Activated CD8-positive, alpha-beta T cell treated with anti-CD3 and anti-CD28 coated beads for 36 hours (primary cell): ENCODE measurements at regions of chr11 and their contacts with region 1.

Region 1: GRCh38 chr11:74321487-74322188 is 10.2 kb upstream of the P4HA3 start:
- DNase-seq: peak; percentile 42
- ATAC-seq: no peak
- H3K4me3 Mint-ChIP-seq: no peak overlapping the region
- H3K27ac Mint-ChIP-seq: no peak overlapping the region
- H3K4me1 Mint-ChIP-seq: no peaks in the 10 kb centered on the region
- H3K27me3 Mint-ChIP-seq: peaks cover 9% of the 10 kb centered on the region
- CTCF ChIP-seq: peak; percentile 70

Region 2: DNA sequence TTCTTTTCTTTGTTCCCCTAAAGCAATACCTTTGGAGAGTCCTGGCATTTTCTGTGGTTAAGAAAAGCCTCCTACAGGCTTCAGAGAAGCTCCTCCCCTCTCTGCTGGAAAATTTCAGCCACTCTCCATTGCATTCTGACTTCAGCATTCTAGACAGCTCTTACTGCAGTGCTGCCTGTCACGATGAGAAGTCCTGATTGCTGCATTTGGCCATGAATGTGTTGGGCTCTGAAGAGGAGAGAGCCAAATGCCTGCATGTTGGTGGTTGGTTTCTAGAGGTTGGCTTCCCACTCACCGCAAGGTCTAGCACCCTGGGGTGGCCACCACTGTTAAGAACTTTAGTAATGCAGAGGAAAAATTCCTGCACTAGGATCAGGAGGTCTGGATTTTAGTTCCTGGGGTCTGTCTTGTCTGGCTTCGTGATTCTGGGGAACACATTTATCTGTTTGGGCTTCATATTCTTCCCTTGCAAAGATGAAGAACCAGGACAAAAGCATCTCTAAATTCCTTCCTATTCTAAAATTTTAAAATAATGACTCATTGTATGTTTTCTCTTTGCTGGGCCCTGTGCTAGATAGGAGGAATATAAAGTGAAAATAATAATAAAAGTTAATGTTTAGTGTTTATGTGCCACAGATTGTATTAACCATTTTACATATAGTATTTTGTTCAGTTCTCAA is 483.1 kb before region 1 on chr11:
- CTCF ChIA-PET with region 1: no interaction called
- POLR2A ChIA-PET with region 1: no interaction called
- intact Hi-C with region 1: no loop called
- DNase-seq: no peak
- ATAC-seq: no peak
- H3K4me3 Mint-ChIP-seq: no peak overlapping the region
- H3K27ac Mint-ChIP-seq: no peak overlapping the region
- H3K4me1 Mint-ChIP-seq: no peaks in the 10 kb centered on the region
- H3K27me3 Mint-ChIP-seq: no peaks in the 10 kb centered on the region
- CTCF ChIP-seq: no peak

Region 3: GRCh38 chr11:74255741-74256369 is 65.8 kb before region 1 on chr11:
- CTCF ChIA-PET with region 1: interaction called, 39 read pairs
- POLR2A ChIA-PET with region 1: interaction called, 3 read pairs
- intact Hi-C with region 1: loop called (anchors 5 kb)
- DNase-seq: peak; percentile 60
- ATAC-seq: peak; percentile 81
- H3K4me3 Mint-ChIP-seq: no peak overlapping the region
- H3K27ac Mint-ChIP-seq: no peak overlapping the region
- H3K4me1 Mint-ChIP-seq: peaks cover 3% of the 10 kb centered on the region
- H3K27me3 Mint-ChIP-seq: no peaks in the 10 kb centered on the region
- CTCF ChIP-seq: peak; percentile 85

Region 4: DNA sequence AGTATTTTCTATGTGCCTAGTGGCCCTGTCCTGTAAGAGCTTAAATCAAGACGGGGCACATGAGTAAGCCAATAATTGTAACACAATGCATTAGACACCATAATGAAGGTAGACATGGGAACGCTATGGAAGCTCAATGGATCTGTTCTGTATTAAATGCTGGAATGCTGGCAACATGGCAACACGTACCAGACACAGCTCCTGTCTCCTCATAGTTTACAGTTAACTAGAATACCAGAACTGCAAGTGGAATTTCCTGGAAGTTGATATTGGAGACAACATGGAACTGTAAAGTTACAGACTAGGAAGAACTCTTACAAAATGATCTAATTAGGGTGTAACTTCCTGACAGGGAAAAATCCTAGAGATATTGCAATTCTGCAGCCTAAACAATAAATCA is 22.6 kb before region 1 on chr11:
- CTCF ChIA-PET with region 1: interaction called, 14 read pairs
- POLR2A ChIA-PET with region 1: no interaction called
- intact Hi-C with region 1: no loop called
- DNase-seq: no peak
- ATAC-seq: no peak
- H3K4me3 Mint-ChIP-seq: no peak overlapping the region
- H3K27ac Mint-ChIP-seq: no peak overlapping the region
- H3K4me1 Mint-ChIP-seq: peaks cover 5% of the 10 kb centered on the region
- H3K27me3 Mint-ChIP-seq: peaks cover 7% of the 10 kb centered on the region
- CTCF ChIP-seq: no peak

Region 5: DNA sequence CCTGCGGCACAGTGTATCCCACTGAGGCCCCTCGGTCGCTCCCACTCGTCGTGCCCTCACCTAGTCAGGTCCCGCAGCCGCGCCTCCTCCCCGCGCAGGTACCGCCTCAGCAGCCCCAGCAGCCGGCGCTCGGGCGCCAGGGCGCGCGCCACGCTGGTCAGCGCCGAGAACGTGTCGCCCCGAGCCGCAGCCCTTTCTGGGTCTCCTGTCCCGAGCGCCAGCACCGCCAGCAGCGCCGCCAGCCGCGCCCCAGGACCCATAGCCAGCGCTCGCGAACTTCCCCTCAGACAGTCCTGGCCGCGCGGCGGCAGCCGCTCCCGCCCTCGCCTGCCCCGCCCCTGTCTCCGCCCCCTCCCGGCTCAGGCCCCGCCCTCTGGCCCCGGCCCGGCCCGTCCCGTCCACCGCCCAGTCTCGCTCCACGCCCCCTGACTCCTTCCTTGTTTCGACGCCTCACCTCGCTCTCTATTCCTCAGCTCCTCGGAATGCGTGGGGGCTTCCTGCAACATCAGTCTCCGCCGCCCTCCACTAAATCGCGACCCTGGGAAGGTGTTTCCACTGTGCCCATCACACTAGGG is 10.2 kb before region 1 on chr11 and contains the start of gene P4HA3:
- CTCF ChIA-PET with region 1: interaction called, 10 read pairs
- POLR2A ChIA-PET with region 1: no interaction called
- intact Hi-C with region 1: no loop called
- DNase-seq: peak; percentile 60
- ATAC-seq: peak; percentile 99
- H3K4me3 Mint-ChIP-seq: peak within 1 kb of the TSS; percentile 49
- H3K27ac Mint-ChIP-seq: no peak within 1 kb of the TSS
- H3K4me1 Mint-ChIP-seq: peaks cover 9% of the 10 kb centered on the region
- H3K27me3 Mint-ChIP-seq: peaks cover 32% of the 10 kb centered on the region
- CTCF ChIP-seq: no peak
- total RNA-seq, gene P4HA3: not detected